T-cell (primary cell): ENCODE measurements at regions of chr17 and their contacts with region 1.

Region 1: GRCh38 chr17:39667262-39668198 is 723 bp upstream of the PNMT start:
- DNase-seq: peak in 4 of 35 experiments; percentile 22 to 29 (median 24)
- ATAC-seq: peak in 2 of 4 experiments; percentile 11 to 15
- H3K4me3 ChIP-seq: peak overlapping the region in 1 of 2 donors; percentile 30
- H3K4me3 Mint-ChIP-seq: peak overlapping the region; percentile 54 to 60 (median 59)
- H3K27ac ChIP-seq: no peak overlapping the region
- H3K27ac Mint-ChIP-seq: no peak overlapping the region
- H3K4me1 ChIP-seq: peaks cover 2 to 35% of the 10 kb centered on the region in 2 experiments
- H3K4me1 Mint-ChIP-seq: peaks cover 14 to 18% (median 15%) of the 10 kb centered on the region in 3 donors
- H3K27me3 ChIP-seq: peaks cover 0 to 60% of the 10 kb centered on the region in 2 experiments
- H3K27me3 Mint-ChIP-seq: peaks cover 12 to 18% of the 10 kb centered on the region in 2 donors

Region 2: DNA sequence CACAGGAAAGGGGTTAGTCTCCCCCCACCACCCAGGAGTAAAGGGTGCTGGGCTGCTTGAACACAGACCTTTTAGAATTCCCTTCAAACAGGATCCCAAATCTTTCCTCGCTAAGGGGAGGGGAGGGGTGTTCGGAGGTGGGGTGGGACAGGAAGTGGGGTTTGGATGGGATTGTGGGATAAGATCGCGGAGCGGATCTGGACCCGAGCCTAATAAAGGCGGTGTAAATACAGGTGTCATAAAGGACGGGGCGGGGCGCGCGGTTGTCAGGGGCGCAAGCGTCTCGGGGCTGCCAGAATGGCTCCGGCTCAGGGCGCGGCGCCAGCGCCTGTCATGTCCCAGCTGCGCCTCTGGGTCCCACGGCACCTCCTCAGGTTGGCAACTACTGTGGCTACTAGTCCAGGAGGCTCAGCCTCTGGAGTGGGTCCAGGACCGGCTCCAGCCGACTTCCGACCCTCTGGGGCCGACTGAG is 640.5 kb before region 1 on chr17:
- CTCF ChIA-PET with region 1: no interaction called
- POLR2A ChIA-PET with region 1: no interaction called
- DNase-seq: peak in 21 of 35 experiments; percentile 6 to 40 (median 22)
- ATAC-seq: peak; percentile 31 to 83 (median 61)
- H3K4me3 ChIP-seq: peak overlapping the region in 1 of 2 donors; percentile 7
- H3K4me3 Mint-ChIP-seq: peak overlapping the region in 1 of 3 donors; percentile 52
- H3K27ac ChIP-seq: no peak overlapping the region
- H3K27ac Mint-ChIP-seq: no peak overlapping the region
- H3K4me1 ChIP-seq: peaks cover 0 to 10% of the 10 kb centered on the region in 2 experiments
- H3K4me1 Mint-ChIP-seq: peaks cover 4 to 11% (median 5%) of the 10 kb centered on the region in 3 donors
- H3K27me3 ChIP-seq: peaks cover 2 to 44% of the 10 kb centered on the region in 2 experiments
- H3K27me3 Mint-ChIP-seq: peaks cover 5 to 22% of the 10 kb centered on the region in 2 donors

Region 3: GRCh38 chr17:39629898-39630297 is 37.6 kb before region 1 on chr17:
- CTCF ChIA-PET with region 1: interaction called in 1 of 2 experiments, 10 read pairs
- POLR2A ChIA-PET with region 1: no interaction called
- DNase-seq: no peak
- ATAC-seq: no peak
- H3K4me3 ChIP-seq: no peak overlapping the region
- H3K4me3 Mint-ChIP-seq: no peak overlapping the region
- H3K27ac ChIP-seq: no peak overlapping the region
- H3K27ac Mint-ChIP-seq: no peak overlapping the region
- H3K4me1 ChIP-seq: peaks cover 18 to 27% of the 10 kb centered on the region in 2 experiments
- H3K4me1 Mint-ChIP-seq: peaks cover 22 to 24% (median 22%) of the 10 kb centered on the region in 3 donors
- H3K27me3 ChIP-seq: peaks cover 0 to 83% of the 10 kb centered on the region in 2 experiments
- H3K27me3 Mint-ChIP-seq: peaks cover 35 to 43% of the 10 kb centered on the region in 2 donors